ENCODE measurements at regions of chr9 and their contacts with region 1.

Region 1: GRCh38 chr9:131776473-131776872 is 36.6 kb upstream of the RAPGEF1 start:
- DNase-seq: no peak
- ATAC-seq: no peak
- H3K4me3 Mint-ChIP-seq: no peak overlapping the region
- H3K27ac Mint-ChIP-seq: no peak overlapping the region
- H3K4me1 Mint-ChIP-seq: no peaks in the 10 kb centered on the region
- H3K27me3 Mint-ChIP-seq: peaks cover 26% of the 10 kb centered on the region
- CTCF ChIP-seq: no peak

Region 2: DNA sequence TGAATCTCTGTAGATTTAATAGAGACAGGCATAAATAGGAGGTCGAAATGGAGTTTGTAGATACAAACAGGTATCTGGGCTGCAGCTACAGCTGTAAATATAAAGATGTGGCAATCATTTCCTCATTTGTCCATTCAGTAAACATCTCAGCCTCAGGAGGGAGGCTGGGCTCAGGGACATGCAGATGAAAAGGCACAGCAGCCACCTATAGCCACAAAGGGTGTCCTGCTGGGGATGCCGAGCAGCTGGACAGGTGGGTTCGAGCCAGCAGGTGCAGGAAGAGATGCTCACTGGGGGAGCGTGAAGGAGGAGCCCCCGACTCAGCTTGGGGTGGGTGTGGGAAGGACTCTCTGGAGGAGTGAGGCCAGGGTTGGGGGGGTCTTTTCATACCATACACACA is 11.9 kb after region 1 on chr9:
- CTCF ChIA-PET with region 1: no interaction called
- POLR2A ChIA-PET with region 1: no interaction called
- intact Hi-C with region 1: no loop called
- DNase-seq: no peak
- ATAC-seq: no peak
- H3K4me3 Mint-ChIP-seq: no peak overlapping the region
- H3K27ac Mint-ChIP-seq: no peak overlapping the region
- H3K4me1 Mint-ChIP-seq: no peaks in the 10 kb centered on the region
- H3K27me3 Mint-ChIP-seq: peaks cover 48% of the 10 kb centered on the region
- CTCF ChIP-seq: no peak

Region 3: DNA sequence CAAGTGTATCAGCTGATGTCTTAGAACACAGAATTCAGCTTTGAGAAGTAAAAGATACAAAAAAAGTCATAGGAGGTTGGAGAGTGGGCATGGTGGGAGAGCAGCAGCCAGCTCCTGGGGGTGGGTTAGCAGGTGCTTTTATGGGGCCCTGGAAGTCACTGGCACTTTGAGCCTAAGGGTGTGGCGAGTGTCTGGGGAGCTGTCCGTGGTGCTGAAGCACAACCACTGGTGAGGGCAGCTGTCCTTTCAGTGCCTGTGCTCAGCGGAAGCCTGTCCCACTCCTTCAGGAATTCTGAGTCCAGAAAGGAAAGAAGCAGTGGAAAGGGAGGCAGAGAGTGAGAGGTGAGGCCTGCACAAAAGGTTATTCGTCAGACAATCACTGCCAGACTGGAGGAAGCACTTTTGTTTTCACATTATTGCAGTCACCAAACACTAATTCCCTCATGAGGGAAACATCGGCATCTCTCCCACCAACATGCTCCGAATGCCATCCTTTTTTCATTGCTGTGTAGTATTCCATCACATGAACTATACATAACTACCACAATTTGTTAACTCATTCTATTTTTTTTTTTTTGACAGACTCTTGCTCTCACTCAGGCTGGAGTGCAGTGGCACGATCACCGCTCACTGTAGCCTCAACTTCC is 22.8 kb after region 1 on chr9:
- CTCF ChIA-PET with region 1: no interaction called
- POLR2A ChIA-PET with region 1: no interaction called
- intact Hi-C with region 1: loop called (anchors 2 kb)
- DNase-seq: peak; percentile 26
- ATAC-seq: no peak
- H3K4me3 Mint-ChIP-seq: no peak overlapping the region
- H3K27ac Mint-ChIP-seq: no peak overlapping the region
- H3K4me1 Mint-ChIP-seq: no peaks in the 10 kb centered on the region
- H3K27me3 Mint-ChIP-seq: peaks cover 18% of the 10 kb centered on the region
- CTCF ChIP-seq: no peak

Measured in activated B cell treated with CpG ODN at 0.5 μM for 24 hours (primary cell).